H1 (cell line): ENCODE measurements at regions of chr7 and their contacts with region 1.

Region 1: DNA sequence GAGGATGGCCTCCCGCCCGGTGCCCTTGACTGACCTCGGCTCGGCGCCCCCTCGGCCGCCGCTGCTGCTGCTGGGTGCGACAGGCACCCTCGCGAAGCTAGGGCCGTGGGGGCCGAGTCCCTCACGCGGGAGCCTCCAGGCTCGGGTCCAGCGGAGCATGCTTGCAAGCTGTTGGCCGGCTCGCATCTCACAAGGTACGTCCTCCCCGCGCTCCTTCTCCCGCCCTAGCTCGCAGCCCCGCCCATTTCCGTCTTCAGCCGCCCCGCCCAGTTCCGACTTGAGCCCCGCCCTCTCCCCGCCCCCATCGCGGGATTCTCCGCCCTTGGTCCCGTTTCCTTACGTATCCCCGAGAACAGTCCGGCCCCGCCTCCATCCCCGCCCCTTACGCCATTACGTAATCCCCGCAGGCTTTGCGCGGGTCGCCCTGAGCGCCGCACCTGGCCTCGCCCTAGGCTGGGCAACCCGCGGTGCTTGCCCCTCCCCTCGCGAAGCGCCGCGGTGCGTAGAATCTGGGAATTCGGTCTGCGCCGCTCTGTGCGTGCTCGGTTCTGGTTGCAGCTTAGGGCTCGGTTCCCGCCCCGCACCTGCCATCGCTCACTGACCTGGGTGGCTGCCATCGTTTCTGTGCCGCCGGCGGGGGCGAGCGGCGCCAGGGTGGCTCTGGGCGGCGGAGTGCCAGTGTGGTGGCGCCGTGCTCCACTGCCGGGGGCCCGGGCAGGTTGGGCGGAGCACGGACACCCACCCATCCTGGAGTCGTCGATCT is at the start of gene ABHD11:
- DNase-seq: peak; percentile 97 to 99
- H3K4me3 ChIP-seq: peak within 1 kb of the TSS; percentile 79 to 93 (median 86)
- H3K27ac ChIP-seq: peak within 1 kb of the TSS; percentile 91
- H3K4me1 ChIP-seq: peaks cover 3 to 43% (median 25%) of the 10 kb centered on the region in 4 experiments
- H3K27me3 ChIP-seq: peaks cover 0 to 2% (median 0%) of the 10 kb centered on the region in 4 experiments; a peak in 2 of 7 replicates
- CTCF ChIP-seq: no peak
- EP300 ChIP-seq: peak in 1 of 2 experiments; percentile 85; a peak in 1 of 3 replicates
- POLR2A ChIP-seq: peak in 1 of 2 experiments; percentile 97; a peak in 2 of 3 replicates
- RAD21 ChIP-seq: peak in 1 of 2 experiments; percentile 12; a peak in 1 of 4 replicates
- total RNA-seq, gene ABHD11: 19.8 and 19.9 TPM in 2 replicates

Region 2: GRCh38 chr7:73585196-73585595 is 153.6 kb before region 1 on chr7:
- CTCF ChIA-PET with region 1: interaction called, 12 read pairs
- POLR2A ChIA-PET with region 1: interaction called, 3 read pairs
- DNase-seq: no peak
- H3K4me3 ChIP-seq: no peak overlapping the region
- H3K27ac ChIP-seq: no peak overlapping the region
- H3K4me1 ChIP-seq: no peaks in the 10 kb centered on the region
- H3K27me3 ChIP-seq: peaks cover 0 to 19% (median 10%) of the 10 kb centered on the region in 4 experiments; a peak in 4 of 7 replicates
- CTCF ChIP-seq: no peak
- EP300 ChIP-seq: no peak
- POLR2A ChIP-seq: no peak
- RAD21 ChIP-seq: no peak

Region 3: GRCh38 chr7:73726083-73726466 is 12.7 kb before region 1 on chr7:
- CTCF ChIA-PET with region 1: interaction called, 15 read pairs
- POLR2A ChIA-PET with region 1: interaction called, 3 read pairs
- DNase-seq: no peak
- H3K4me3 ChIP-seq: no peak overlapping the region
- H3K27ac ChIP-seq: no peak overlapping the region
- H3K4me1 ChIP-seq: no peaks in the 10 kb centered on the region
- H3K27me3 ChIP-seq: no peaks in the 10 kb centered on the region; a peak in 1 of 7 replicates
- CTCF ChIP-seq: no peak
- EP300 ChIP-seq: no peak
- POLR2A ChIP-seq: no peak
- RAD21 ChIP-seq: no peak

Region 4: DNA sequence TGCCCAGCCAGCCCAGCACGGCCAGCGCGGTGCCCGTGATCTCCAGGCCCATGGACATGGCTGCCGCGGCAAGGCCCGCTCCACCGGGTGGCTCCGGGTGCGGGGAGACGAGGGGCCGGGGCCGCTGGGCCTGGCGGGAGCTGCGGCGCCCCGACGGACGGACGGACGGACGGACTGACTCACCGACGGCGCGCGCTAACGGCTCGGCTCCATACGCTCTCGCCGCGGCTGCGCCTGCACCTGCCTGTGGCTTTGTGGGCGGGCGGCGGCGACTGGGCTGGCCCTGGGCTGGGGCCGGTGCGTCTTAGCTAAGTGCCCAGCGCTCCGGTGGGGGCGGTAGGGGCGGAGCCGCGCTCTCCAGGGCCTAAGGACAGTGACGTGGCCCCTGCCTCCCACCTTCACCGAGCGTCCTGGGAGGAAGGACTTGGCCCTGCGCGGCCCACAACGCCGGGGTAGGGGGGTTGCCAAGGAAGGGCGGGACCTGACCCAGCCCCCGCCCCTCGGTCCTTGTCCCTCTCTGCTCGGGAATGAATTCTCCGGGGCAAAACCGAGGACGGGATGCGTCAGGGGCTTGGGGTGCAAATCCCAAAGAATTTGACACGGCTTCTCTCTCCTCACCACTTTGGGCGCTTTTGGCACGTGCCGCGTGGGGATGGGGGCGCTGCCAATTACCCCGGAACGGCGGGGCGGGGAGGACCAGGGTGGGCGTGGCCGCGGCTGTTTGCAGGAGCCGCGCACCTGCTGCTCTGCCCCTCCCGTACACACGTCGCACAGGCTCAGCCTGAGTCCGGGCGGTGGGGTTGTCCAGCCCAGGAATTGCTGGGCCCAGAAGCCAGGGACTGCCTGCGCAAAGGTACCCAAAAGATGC is 31.4 kb after region 1 on chr7 and contains the start of gene CLDN3:
- CTCF ChIA-PET with region 1: interaction called, 4 read pairs
- POLR2A ChIA-PET with region 1: interaction called, 47 read pairs
- DNase-seq: peak; percentile 79 to 92
- H3K4me3 ChIP-seq: peak within 1 kb of the TSS; percentile 39 to 65 (median 54)
- H3K27ac ChIP-seq: peak within 1 kb of the TSS; percentile 45
- H3K4me1 ChIP-seq: peaks cover 0 to 13% (median 9%) of the 10 kb centered on the region in 4 experiments; a peak in 6 of 7 replicates
- H3K27me3 ChIP-seq: peaks cover 0 to 3% (median 0%) of the 10 kb centered on the region in 4 experiments; a peak in 2 of 7 replicates
- CTCF ChIP-seq: no peak
- EP300 ChIP-seq: peak in 1 of 2 experiments; percentile 50; a peak in 1 of 3 replicates
- POLR2A ChIP-seq: peak in 1 of 2 experiments; percentile 76; a peak in 2 of 3 replicates
- RAD21 ChIP-seq: no peak
- total RNA-seq, gene CLDN3: 19.1 and 20.8 TPM in 2 replicates

Region 5: DNA sequence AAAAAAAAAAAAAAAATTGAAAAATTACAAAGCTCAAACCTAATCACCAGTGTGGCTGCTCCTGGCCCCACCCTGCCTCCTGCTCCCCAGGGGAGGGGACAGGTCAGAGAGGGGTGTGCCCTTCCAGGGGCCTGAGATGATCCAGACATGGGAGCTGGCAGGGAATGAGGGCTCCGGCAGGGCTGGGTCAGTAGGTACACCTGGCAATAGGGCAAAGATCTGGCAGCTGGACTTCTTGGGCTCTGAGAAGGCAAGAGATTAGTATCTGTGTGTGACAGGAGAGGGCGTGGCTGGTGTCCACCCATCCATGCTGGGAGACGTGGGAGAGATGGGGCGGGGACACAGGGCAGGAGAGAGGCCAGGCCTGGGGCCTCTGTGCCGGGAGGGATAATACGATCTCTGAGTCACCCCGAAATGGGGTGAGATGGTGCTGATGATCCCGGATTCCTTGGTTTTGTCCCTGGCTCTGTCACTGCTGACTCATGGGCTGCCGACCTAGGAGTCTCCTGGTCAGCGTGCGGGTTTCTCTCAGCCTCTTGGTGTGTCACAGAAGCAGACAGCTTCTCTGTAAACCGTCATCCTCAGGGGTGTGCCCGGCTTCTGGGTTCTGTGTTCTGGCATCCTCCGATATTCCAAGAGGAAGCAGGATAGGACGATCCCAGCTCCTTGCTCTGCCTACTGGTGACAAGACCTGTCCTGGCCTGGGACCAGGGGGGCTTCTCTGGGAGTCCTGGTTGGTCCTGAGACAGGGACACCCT is 83.7 kb after region 1 on chr7:
- CTCF ChIA-PET with region 1: interaction called, 12 read pairs
- POLR2A ChIA-PET with region 1: interaction called, 15 read pairs
- DNase-seq: no peak
- H3K4me3 ChIP-seq: no peak overlapping the region
- H3K27ac ChIP-seq: no peak overlapping the region
- H3K4me1 ChIP-seq: peaks cover 2 to 5% (median 3%) of the 10 kb centered on the region in 4 experiments
- H3K27me3 ChIP-seq: peaks cover 0 to 5% (median 0%) of the 10 kb centered on the region in 4 experiments; a peak in 1 of 7 replicates
- CTCF ChIP-seq: no peak
- EP300 ChIP-seq: no peak
- POLR2A ChIP-seq: no peak
- RAD21 ChIP-seq: no peak

Region 6: GRCh38 chr7:73842247-73842895 is 103.6 kb after region 1 on chr7 and contains the start of gene METTL27:
- CTCF ChIA-PET with region 1: interaction called, 8 read pairs
- POLR2A ChIA-PET with region 1: interaction called, 24 read pairs
- DNase-seq: peak; percentile 82 to 91
- H3K4me3 ChIP-seq: peak within 1 kb of the TSS; percentile 52 to 78 (median 58)
- H3K27ac ChIP-seq: 0 out of 2 replicates have a peak within 1 kb of the TSS, but pooled peaks have one; percentile 61
- H3K4me1 ChIP-seq: peaks cover 0 to 11% (median 5%) of the 10 kb centered on the region in 4 experiments; a peak in 5 of 7 replicates
- H3K27me3 ChIP-seq: no peaks in the 10 kb centered on the region
- CTCF ChIP-seq: no peak
- EP300 ChIP-seq: no peak
- POLR2A ChIP-seq: peak in 1 of 2 experiments; percentile 61; a peak in 2 of 3 replicates
- RAD21 ChIP-seq: no peak
- total RNA-seq, gene METTL27: 5.6 and 6.2 TPM in 2 replicates